Natural killer cell (primary cell): ENCODE measurements at regions of chr9 and their contacts with region 1.

Region 1: DNA sequence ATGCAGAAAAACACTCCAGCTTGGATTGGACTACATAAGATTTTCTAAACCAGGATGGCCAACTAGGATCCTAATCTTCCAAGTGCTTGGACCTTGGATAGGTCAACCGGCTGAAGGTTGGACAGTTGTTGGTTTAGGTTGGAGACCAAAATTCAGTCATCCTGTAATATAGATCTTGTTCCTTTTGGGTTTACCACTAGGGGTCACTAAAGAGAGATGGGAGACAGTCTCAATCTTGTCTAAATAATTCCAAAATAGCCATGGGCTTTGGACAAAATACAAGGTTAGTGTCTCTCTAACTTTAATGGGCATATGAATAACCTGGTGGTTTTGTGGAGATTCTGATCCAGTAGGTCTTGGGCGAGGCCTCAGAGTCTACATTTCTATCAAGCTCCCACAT is 148.7 kb upstream of the ERCC6L2 start:
- DNase-seq: peak in 1 of 2 donors; percentile 50
- ATAC-seq: no peak
- H3K4me3 ChIP-seq: no peak overlapping the region
- H3K4me3 Mint-ChIP-seq: no peak overlapping the region
- H3K27ac ChIP-seq: no peak overlapping the region
- H3K27ac Mint-ChIP-seq: peak overlapping the region in 1 of 2 donors; percentile 59
- H3K4me1 ChIP-seq: peaks cover 22% of the 10 kb centered on the region
- H3K4me1 Mint-ChIP-seq: peaks cover 47 to 53% of the 10 kb centered on the region in 2 donors
- H3K27me3 ChIP-seq: no peaks in the 10 kb centered on the region
- H3K27me3 Mint-ChIP-seq: peaks cover under 1 to 2% of the 10 kb centered on the region in 2 donors
- CTCF ChIP-seq: peak; percentile 68

Region 2: DNA sequence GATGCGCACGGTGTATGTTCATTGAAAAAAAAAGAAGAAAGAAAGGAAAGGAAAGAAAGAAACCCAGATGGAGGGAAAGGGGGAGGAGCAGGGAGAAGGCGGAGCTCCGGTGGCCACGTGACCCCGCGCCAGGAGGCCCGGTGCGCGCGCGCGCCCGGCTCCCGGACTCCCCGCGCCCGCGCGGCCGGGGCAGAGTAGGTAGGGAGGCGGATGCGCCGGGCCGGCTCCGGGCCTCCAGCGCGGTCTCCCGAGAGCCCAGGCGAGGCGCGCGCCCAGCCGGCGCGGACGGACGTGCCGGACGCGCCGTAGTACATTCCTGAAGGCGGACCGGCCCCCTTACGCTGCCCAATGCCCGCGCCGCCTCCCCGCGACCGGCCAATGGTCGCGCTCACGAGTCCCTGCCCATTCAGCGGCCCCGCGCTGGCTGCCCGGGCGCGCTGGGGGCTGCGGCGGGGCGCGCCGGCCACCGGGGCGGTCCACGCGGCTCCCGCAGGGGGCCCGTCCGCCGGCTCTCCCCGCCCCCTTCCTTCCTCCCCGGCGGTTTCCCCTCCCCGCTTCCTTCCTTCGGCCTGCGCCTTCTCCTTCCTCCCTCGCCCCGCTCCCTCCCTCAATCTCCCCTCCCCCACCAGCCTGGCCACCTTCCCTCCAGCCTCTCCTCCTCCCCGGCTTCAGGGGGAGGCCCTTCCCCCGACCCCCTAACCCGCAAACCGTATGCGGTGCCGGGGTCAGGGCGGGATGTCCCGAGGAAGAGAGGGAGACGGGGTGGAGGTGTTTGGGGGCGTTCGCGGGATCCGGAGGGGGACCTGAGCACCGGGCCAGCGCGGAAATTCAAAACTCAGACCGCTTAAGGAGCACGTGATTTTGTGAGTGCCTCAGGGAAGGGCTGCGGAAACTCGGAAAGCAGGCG is 215.8 kb before region 1 on chr9:
- intact Hi-C with region 1: loop called (anchors 2 kb)
- DNase-seq: peak; percentile 77 to 91
- ATAC-seq: peak; percentile 44 to 80 (median 68)
- H3K4me3 ChIP-seq: peak overlapping the region; percentile 66
- H3K4me3 Mint-ChIP-seq: peak overlapping the region; percentile 94
- H3K27ac ChIP-seq: peak overlapping the region; percentile 62
- H3K27ac Mint-ChIP-seq: peak overlapping the region; percentile 88 to 93
- H3K4me1 ChIP-seq: peaks cover 54% of the 10 kb centered on the region
- H3K4me1 Mint-ChIP-seq: peaks cover 49 to 57% of the 10 kb centered on the region in 2 donors
- H3K27me3 ChIP-seq: peaks cover 35% of the 10 kb centered on the region
- H3K27me3 Mint-ChIP-seq: peaks cover 7 to 12% of the 10 kb centered on the region in 2 donors
- CTCF ChIP-seq: no peak

Region 3: DNA sequence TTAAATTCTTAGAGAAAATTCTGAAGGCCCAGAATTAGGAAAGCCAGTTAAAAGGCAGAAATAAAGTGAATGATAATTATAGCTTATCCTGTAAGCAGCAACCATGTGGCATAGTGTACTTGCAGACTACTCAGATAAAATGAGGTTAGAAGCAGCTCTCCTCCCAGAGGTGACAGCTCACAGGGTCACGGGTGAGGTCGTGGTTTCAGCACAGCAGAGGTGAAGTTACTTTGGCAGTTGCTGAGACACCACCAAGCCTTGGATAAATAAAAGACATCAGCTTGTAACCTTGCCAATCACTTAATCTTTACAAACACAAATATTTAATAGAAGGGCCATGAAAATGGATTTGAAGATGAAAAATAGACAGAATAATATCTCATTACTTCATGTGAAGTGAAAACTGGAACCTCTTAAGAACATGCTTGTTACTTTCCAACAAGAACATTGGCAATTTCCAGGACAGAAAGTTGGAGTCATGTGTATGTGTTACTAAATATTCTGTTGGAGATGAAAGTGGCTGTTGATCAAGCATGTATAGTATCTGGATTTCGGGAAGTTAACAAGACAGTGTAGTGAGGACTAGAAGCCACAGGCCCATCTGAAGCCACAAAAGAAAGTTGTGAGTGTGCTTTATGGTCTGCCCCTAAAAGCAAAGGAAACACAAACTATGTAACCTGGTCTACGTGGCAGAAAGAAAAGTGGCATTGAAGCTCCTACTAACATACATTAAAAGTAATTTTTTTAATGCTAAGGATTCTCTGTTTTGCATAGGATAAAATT is 283.1 kb after region 1 on chr9:
- intact Hi-C with region 1: loop called (anchors 5 kb)
- DNase-seq: peak; percentile 75 to 78
- ATAC-seq: peak; percentile 72 to 94 (median 92)
- H3K4me3 ChIP-seq: no peak overlapping the region
- H3K4me3 Mint-ChIP-seq: peak overlapping the region; percentile 79
- H3K27ac ChIP-seq: peak overlapping the region; percentile 99
- H3K27ac Mint-ChIP-seq: no peak overlapping the region
- H3K4me1 ChIP-seq: peaks cover 35% of the 10 kb centered on the region
- H3K4me1 Mint-ChIP-seq: peaks cover 5 to 46% of the 10 kb centered on the region in 2 donors
- H3K27me3 ChIP-seq: no peaks in the 10 kb centered on the region
- H3K27me3 Mint-ChIP-seq: no peaks in the 10 kb centered on the region
- CTCF ChIP-seq: no peak

Region 4: GRCh38 chr9:96150324-96151227 is 423.8 kb after region 1 on chr9:
- intact Hi-C with region 1: loop called (anchors 5 kb)
- DNase-seq: peak; percentile 47 to 67
- ATAC-seq: peak; percentile 84 to 90 (median 86)
- H3K4me3 ChIP-seq: no peak overlapping the region
- H3K4me3 Mint-ChIP-seq: peak overlapping the region; percentile 45
- H3K27ac ChIP-seq: no peak overlapping the region
- H3K27ac Mint-ChIP-seq: peak overlapping the region in 1 of 2 donors; percentile 41
- H3K4me1 ChIP-seq: peaks cover 21% of the 10 kb centered on the region
- H3K4me1 Mint-ChIP-seq: peaks cover 15 to 25% of the 10 kb centered on the region in 2 donors
- H3K27me3 ChIP-seq: peaks cover 26% of the 10 kb centered on the region
- H3K27me3 Mint-ChIP-seq: peaks cover 26 to 35% of the 10 kb centered on the region in 2 donors
- CTCF ChIP-seq: no peak